ENCODE measurements at regions of chrX and their contacts with region 1.

Region 1: DNA sequence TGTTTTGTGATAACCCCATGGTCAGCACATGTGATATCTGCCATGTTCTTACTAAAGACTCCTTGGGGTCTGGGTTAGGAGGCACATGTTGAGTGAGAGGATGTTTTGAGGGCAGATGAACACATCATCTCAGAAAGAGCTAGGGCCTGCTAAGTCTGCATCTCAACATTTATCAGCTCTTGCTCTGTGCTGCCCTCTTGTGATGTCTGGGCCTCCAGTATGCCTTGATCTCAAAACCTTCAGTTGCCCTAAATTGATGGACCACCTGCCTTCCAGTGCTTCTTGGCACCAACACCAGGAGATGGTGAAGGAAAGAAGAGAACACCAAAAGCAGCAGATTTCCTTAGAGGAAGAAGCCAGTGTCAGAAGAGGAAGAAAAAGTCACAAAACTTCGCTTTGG is 22.5 kb downstream of the MID1 start:
- DNase-seq: no peak
- H3K4me3 ChIP-seq: no peak overlapping the region
- H3K27ac ChIP-seq: no peak overlapping the region
- H3K4me1 ChIP-seq: peaks cover 0 to 6% (median 0%) of the 10 kb centered on the region in 4 donors
- H3K27me3 ChIP-seq: no peaks in the 10 kb centered on the region
- CTCF ChIP-seq: peak in 2 of 5 experiments; percentile 16 to 25
- EP300 ChIP-seq: no peak
- POLR2A ChIP-seq: no peak

Region 2: GRCh38 chrX:10469900-10470408 is 127.9 kb before region 1 on chrX:
- in situ Hi-C with region 1: no loop called
- intact Hi-C with region 1: loop called (anchors 10 kb)
- DNase-seq: no peak
- H3K4me3 ChIP-seq: no peak overlapping the region
- H3K27ac ChIP-seq: no peak overlapping the region
- H3K4me1 ChIP-seq: peaks cover 0 to 2% (median 0%) of the 10 kb centered on the region in 4 donors
- H3K27me3 ChIP-seq: no peaks in the 10 kb centered on the region
- CTCF ChIP-seq: no peak
- EP300 ChIP-seq: no peak
- POLR2A ChIP-seq: no peak

Measured in transverse colon (tissue), 4 donors.